PC-9 (cell line): ENCODE measurements at regions of chr11 and their contacts with region 1.

Region 1: DNA sequence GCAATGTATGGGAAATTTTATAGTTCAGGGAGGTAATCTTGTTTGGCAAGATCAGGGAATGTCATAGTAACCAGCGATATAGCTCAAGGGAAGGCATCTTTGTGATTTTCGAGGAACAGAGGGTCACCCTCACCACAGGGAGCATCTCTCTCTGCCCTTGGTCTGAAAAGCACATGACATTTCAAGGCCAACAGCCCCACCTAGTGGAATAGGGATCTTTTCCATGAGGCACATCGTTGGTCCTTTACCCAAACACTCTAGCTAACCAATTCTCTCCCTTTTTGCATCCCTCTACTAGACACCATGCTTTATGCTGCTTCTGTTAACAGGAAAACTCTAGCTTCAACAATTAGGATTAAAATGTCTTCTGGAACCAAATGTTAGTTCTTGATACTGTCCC is 179.0 kb downstream of the GRM5 start:
- DNase-seq: peak in 1 of 2 experiments; percentile 41
- H3K4me3 ChIP-seq: no peak overlapping the region
- H3K27ac ChIP-seq: no peak overlapping the region
- H3K4me1 ChIP-seq: no peaks in the 10 kb centered on the region
- H3K27me3 ChIP-seq: no peaks in the 10 kb centered on the region
- CTCF ChIP-seq: peak; percentile 75

Region 2: GRCh38 chr11:87722756-87723565 is 1163.8 kb before region 1 on chr11:
- CTCF ChIA-PET with region 1: no interaction called
- POLR2A ChIA-PET with region 1: no interaction called
- intact Hi-C with region 1: loop called (anchors 5 kb)
- DNase-seq: peak; percentile 10 to 28
- H3K4me3 ChIP-seq: no peak overlapping the region
- H3K27ac ChIP-seq: no peak overlapping the region
- H3K4me1 ChIP-seq: no peaks in the 10 kb centered on the region
- H3K27me3 ChIP-seq: no peaks in the 10 kb centered on the region
- CTCF ChIP-seq: peak; percentile 78

Region 3: DNA sequence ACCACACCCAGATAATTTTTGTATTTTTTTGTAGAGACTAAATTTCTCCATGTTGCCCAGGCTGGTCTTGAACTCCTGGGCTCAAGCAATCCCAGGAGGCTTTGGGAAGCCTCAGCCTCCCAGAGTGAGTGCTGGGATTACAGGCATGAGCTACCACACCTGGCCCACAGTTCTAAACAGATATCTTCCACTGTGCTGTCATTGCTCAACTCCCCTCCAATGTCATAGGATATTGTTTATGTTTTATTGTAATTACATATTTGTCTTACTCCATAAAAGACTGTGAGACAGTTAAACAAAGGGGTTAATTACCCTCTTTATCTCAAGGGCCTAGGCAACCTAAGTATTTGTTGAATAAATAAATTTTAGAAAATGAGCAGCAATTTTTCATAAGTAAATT is 25.2 kb before region 1 on chr11:
- CTCF ChIA-PET with region 1: no interaction called
- POLR2A ChIA-PET with region 1: no interaction called
- intact Hi-C with region 1: no loop called
- DNase-seq: no peak
- H3K4me3 ChIP-seq: no peak overlapping the region
- H3K27ac ChIP-seq: no peak overlapping the region
- H3K4me1 ChIP-seq: no peaks in the 10 kb centered on the region
- H3K27me3 ChIP-seq: no peaks in the 10 kb centered on the region
- CTCF ChIP-seq: no peak